ENCODE measurements at regions of chr6 and their contacts with region 1.

Region 1: DNA sequence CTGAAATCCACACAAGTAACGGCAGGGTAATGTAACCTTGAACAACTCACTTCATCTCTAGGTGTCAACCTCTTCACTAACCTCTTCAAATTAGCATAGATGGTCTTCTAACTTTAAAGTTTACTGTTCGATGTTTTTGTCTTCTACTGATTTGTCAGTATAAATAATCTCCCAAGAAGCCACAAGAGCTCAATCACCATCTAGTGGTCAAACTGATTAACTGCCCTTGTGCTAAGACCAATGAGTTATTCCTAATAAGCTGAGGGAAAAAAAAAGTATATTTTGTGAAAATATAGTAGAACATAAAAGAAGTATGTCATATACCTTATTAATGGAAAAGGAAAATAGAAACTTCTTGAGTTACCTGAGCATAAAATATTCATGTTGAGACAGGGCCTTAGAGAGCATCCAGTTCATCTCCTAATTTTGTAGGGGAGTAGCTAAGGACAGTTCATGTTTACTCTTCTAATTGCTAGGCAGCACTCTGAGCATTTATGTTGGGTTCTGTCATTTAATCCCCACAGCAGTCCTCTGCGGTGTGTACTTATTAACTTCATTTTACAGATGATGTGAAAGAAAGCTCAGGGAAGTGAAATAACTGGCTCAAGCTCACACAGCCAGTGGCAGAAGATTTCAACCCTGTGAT is 317.1 kb downstream of the ESR1 start:
- DNase-seq: no peak
- ATAC-seq: peak; percentile 45
- H3K4me3 Mint-ChIP-seq: no peak overlapping the region
- H3K27ac Mint-ChIP-seq: no peak overlapping the region
- H3K4me1 Mint-ChIP-seq: no peaks in the 10 kb centered on the region
- H3K27me3 Mint-ChIP-seq: no peaks in the 10 kb centered on the region
- CTCF ChIP-seq: peak; percentile 72

Region 2: DNA sequence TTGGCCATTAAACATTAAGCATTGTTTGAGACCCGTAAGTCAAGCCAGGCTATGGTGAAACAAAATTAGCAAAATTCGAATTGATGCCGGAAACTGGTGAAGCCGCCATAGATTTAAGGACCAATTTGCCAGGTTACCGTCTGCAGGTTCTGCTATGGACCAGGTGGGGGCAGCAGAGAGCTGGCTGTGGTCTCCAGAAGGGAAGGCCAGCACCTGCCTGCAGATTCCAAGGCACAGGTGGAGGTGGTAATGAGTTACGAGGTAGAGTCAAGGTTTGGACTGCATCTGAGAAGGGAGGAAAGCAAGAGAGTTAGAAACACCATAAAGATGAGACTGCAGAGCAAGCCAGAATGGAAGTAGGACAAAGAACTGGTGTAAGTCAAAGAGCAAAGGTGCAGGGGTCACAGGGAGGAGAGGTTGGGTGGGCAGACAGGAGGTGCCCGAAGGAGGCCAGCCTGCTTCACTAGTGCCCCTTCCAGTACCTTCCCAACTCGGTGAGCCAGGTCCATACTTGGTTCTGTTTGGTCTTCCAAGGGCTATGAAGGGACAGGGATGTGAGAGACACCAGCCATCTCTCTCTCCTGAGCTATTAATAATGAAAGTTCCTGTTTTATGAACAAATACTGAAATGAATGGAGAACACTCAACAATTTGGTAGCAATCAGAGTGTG is 448.7 kb before region 1 on chr6:
- CTCF ChIA-PET with region 1: interaction called, 13 read pairs
- POLR2A ChIA-PET with region 1: no interaction called
- intact Hi-C with region 1: no loop called
- DNase-seq: peak; percentile 64
- ATAC-seq: peak; percentile 86
- H3K4me3 Mint-ChIP-seq: no peak overlapping the region
- H3K27ac Mint-ChIP-seq: no peak overlapping the region
- H3K4me1 Mint-ChIP-seq: peaks cover 7% of the 10 kb centered on the region
- H3K27me3 Mint-ChIP-seq: no peaks in the 10 kb centered on the region
- CTCF ChIP-seq: peak; percentile 93

Region 3: GRCh38 chr6:151690768-151691562 is 433.6 kb before region 1 on chr6:
- CTCF ChIA-PET with region 1: interaction called, 17 read pairs
- POLR2A ChIA-PET with region 1: no interaction called
- intact Hi-C with region 1: loop called (anchors 10 kb)
- DNase-seq: peak; percentile 64
- ATAC-seq: peak; percentile 91
- H3K4me3 Mint-ChIP-seq: peak overlapping the region; percentile 64
- H3K27ac Mint-ChIP-seq: peak overlapping the region; percentile 69
- H3K4me1 Mint-ChIP-seq: peaks cover 22% of the 10 kb centered on the region
- H3K27me3 Mint-ChIP-seq: no peaks in the 10 kb centered on the region
- CTCF ChIP-seq: no peak

Region 4: GRCh38 chr6:152063170-152063921 is 61.2 kb before region 1 on chr6:
- CTCF ChIA-PET with region 1: no interaction called
- POLR2A ChIA-PET with region 1: no interaction called
- intact Hi-C with region 1: no loop called
- DNase-seq: no peak
- ATAC-seq: no peak
- H3K4me3 Mint-ChIP-seq: no peak overlapping the region
- H3K27ac Mint-ChIP-seq: no peak overlapping the region
- H3K4me1 Mint-ChIP-seq: no peaks in the 10 kb centered on the region
- H3K27me3 Mint-ChIP-seq: no peaks in the 10 kb centered on the region
- CTCF ChIP-seq: no peak